Heart left ventricle (tissue), 16 donors: ENCODE measurements at regions of chr1 and their contacts with region 1.

Region 1: DNA sequence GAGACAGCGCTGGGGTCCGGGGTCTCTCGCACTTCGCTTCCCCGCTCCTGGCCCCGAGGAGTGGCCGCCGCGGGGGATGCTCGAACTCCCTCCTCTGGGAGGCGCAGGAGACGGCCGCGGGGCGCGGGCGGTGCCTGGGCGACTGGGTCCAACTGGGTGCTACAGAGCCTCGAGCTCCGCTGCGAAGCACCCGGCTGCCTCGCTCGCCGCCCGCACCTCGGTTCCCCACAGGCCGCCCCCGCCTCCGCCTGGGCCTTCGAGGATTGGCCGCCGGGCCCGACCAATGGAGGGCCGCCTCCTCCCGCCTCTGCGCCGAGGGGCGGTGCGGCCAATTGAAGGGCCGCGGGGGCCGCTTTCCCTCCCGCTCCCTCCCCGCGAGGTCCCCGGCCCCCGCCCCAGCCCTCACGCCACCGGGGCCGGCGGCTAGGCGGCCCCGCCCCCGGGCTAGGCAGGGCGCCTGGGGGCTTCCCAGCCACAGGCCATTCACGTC is at the start of gene CNN3:
- DNase-seq: peak; percentile 94 to 96 (median 95)
- ATAC-seq: peak; percentile 92 to 96 (median 94)
- H3K4me3 ChIP-seq: peak within 1 kb of the TSS; percentile 69 to 95 (median 80)
- H3K27ac ChIP-seq: peak within 1 kb of the TSS; percentile 95 to 100 (median 97)
- H3K4me1 ChIP-seq: peaks cover 8 to 59% (median 43%) of the 10 kb centered on the region in 12 donors
- H3K27me3 ChIP-seq: peaks cover 0 to 24% (median 0%) of the 10 kb centered on the region in 9 donors
- CTCF ChIP-seq: no peak
- POLR2A ChIP-seq: peak; percentile 76 to 98
- total RNA-seq, gene CNN3: 53.0 to 115 (median 74.1) TPM

Region 2: GRCh38 chr1:94854458-94855306 is 72.3 kb before region 1 on chr1:
- intact Hi-C with region 1: loop called in 9 of 10 experiments (anchors 2 to 10 kb)
- DNase-seq: peak; percentile 84 to 90 (median 87)
- ATAC-seq: peak; percentile 89 to 95 (median 94)
- H3K4me3 ChIP-seq: peak overlapping the region in 11 of 12 donors; percentile 10 to 59 (median 50)
- H3K27ac ChIP-seq: peak overlapping the region in 10 of 12 donors; percentile 12 to 79 (median 70)
- H3K4me1 ChIP-seq: peaks cover 0 to 43% (median 17%) of the 10 kb centered on the region in 12 donors
- H3K27me3 ChIP-seq: no peaks in the 10 kb centered on the region
- CTCF ChIP-seq: peak; percentile 79 to 97 (median 90)
- POLR2A ChIP-seq: peak in 1 of 2 donors; percentile 27

Region 3: GRCh38 chr1:94863919-94864318 is 63.0 kb before region 1 on chr1:
- intact Hi-C with region 1: loop called in 4 of 10 experiments (anchors 2 to 10 kb)
- DNase-seq: peak in 1 of 5 donors; percentile 65
- ATAC-seq: peak; percentile 56 to 92 (median 79)
- H3K4me3 ChIP-seq: peak overlapping the region in 2 of 12 donors; percentile 7 to 15
- H3K27ac ChIP-seq: peak overlapping the region; percentile 58 to 89 (median 80)
- H3K4me1 ChIP-seq: peaks cover 0 to 75% (median 31%) of the 10 kb centered on the region in 12 donors
- H3K27me3 ChIP-seq: no peaks in the 10 kb centered on the region
- CTCF ChIP-seq: no peak
- POLR2A ChIP-seq: no peak

Region 4: GRCh38 chr1:94962409-94963265 is 35.7 kb after region 1 on chr1:
- intact Hi-C with region 1: loop called in 2 of 10 experiments (anchors 5 kb)
- DNase-seq: peak in 2 of 5 donors; percentile 29 to 31
- ATAC-seq: peak in 3 of 4 donors; percentile 74 to 80 (median 74)
- H3K4me3 ChIP-seq: peak overlapping the region in 11 of 12 donors; percentile 12 to 57 (median 46)
- H3K27ac ChIP-seq: peak overlapping the region; percentile 48 to 89 (median 78)
- H3K4me1 ChIP-seq: peaks cover 0 to 25% (median 7%) of the 10 kb centered on the region in 12 donors
- H3K27me3 ChIP-seq: no peaks in the 10 kb centered on the region
- CTCF ChIP-seq: no peak
- POLR2A ChIP-seq: no peak

Region 5: GRCh38 chr1:94983171-94983739 is 56.3 kb after region 1 on chr1:
- intact Hi-C with region 1: loop called in 2 of 10 experiments (anchors 5 kb)
- DNase-seq: peak in 1 of 5 donors; percentile 45
- ATAC-seq: peak in 3 of 4 donors; percentile 62 to 85 (median 81)
- H3K4me3 ChIP-seq: peak overlapping the region in 4 of 12 donors; percentile 2 to 25 (median 7)
- H3K27ac ChIP-seq: peak overlapping the region; percentile 12 to 74 (median 52)
- H3K4me1 ChIP-seq: peaks cover 0 to 51% (median 28%) of the 10 kb centered on the region in 12 donors
- H3K27me3 ChIP-seq: no peaks in the 10 kb centered on the region
- CTCF ChIP-seq: no peak
- POLR2A ChIP-seq: no peak

Region 6: GRCh38 chr1:95023399-95024043 is 96.6 kb after region 1 on chr1:
- intact Hi-C with region 1: loop called in 3 of 10 experiments (anchors 5 kb)
- DNase-seq: peak in 1 of 5 donors; percentile 19
- ATAC-seq: peak; percentile 50 to 85 (median 68)
- H3K4me3 ChIP-seq: no peak overlapping the region
- H3K27ac ChIP-seq: peak overlapping the region in 10 of 12 donors; percentile 21 to 82 (median 62)
- H3K4me1 ChIP-seq: peaks cover 0 to 39% (median 25%) of the 10 kb centered on the region in 12 donors
- H3K27me3 ChIP-seq: no peaks in the 10 kb centered on the region
- CTCF ChIP-seq: no peak
- POLR2A ChIP-seq: no peak